Pancreas (tissue), 10 donors: ENCODE measurements at regions of chr12 and their contacts with region 1.

Region 1: GRCh38 chr12:51531978-51532497 is 59.0 kb upstream of the SCN8A start:
- DNase-seq: peak; percentile 48 to 85 (median 73)
- ATAC-seq: peak; percentile 88 to 99 (median 98)
- H3K4me3 ChIP-seq: no peak overlapping the region
- H3K27ac ChIP-seq: no peak overlapping the region
- H3K4me1 ChIP-seq: peaks cover 0 to 3% (median 0%) of the 10 kb centered on the region in 3 donors
- H3K27me3 ChIP-seq: peaks cover 0 to 4% (median 2%) of the 10 kb centered on the region in 4 donors
- CTCF ChIP-seq: peak; percentile 78 to 85 (median 80)

Region 2: GRCh38 chr12:51814311-51815088 is 282.5 kb after region 1 on chr12:
- intact Hi-C with region 1: loop called in 1 of 3 experiments (anchors 5 kb)
- DNase-seq: peak; percentile 81 to 92 (median 86)
- ATAC-seq: peak; percentile 92 to 94 (median 93)
- H3K4me3 ChIP-seq: peak overlapping the region; percentile 37 to 69 (median 59)
- H3K27ac ChIP-seq: peak overlapping the region; percentile 57 to 79 (median 67)
- H3K4me1 ChIP-seq: no peaks in the 10 kb centered on the region
- H3K27me3 ChIP-seq: no peaks in the 10 kb centered on the region
- CTCF ChIP-seq: peak; percentile 21 to 45 (median 40)